SK-N-SH (cell line): ENCODE measurements at regions of chr17 and their contacts with region 1.

Region 1: DNA sequence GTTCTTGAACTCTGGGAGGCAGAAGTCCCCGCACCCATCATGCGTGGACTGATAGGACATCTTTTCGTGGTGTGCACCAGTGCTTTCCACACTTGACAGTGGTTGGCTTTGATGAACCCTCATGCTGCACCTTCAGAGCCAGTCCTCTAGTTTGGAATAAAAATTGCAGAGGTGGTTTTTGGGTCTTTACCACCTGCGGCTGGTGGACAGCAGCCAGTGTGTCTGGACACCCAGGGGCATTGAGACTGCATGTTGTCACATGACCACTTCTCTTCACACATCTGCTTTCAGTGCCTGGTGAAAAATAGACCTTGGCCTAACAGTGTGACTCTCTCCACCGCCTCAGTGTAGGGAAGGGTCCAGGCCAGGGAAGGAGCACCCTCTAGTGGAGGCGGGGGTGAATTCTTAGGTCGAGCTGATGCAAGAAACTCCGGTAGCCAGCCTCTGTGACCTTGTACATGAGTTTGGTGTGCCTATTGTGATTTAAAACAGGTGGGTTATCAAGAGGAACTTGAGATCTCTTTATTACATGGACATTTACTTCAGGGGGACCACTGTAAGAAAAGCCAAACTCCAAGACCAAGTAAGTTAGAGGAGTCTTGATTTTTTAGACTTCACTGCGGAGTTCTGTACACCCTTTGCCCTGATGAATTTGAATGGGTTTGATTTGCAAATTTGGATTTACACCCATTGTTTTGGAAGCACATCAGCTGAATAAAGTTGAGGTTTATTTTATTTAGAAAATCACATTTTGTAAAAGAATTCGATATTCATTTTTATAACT is 17.9 kb downstream of the GOSR2 start:
- DNase-seq: peak; percentile 91
- H3K4me3 ChIP-seq: no peak overlapping the region
- H3K27ac ChIP-seq: peak overlapping the region; percentile 19 to 58; a peak in 2 of 4 replicates
- H3K4me1 ChIP-seq: peaks cover 14 to 20% of the 10 kb centered on the region in 2 experiments; a peak in 3 of 4 replicates
- H3K27me3 ChIP-seq: no peaks in the 10 kb centered on the region
- CTCF ChIP-seq: peak; percentile 95
- EP300 ChIP-seq: peak in 1 of 2 experiments; percentile 44; a peak in 2 of 4 replicates
- RAD21 ChIP-seq: peak; percentile 97

Region 2: DNA sequence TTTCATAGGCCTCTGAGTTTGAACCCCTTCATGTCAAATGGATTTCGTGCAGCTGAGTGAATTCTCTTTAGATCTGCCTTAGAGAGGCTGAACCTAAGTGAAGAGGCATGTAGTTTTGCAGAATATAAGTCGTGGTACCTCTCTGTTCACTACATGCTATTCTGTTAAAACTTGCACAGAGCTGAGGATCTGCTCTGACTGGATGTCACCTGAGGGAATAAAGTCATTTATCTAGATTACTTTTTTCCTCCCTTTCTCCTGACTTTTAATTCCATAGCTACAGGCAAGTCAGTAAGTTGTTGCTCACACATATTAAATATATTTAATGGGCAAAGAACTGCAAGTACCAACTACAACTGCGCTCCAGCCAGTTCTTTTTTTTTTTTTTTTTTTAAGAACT is 187.0 kb before region 1 on chr17:
- CTCF ChIA-PET with region 1: no interaction called
- POLR2A ChIA-PET with region 1: no interaction called
- DNase-seq: no peak
- H3K4me3 ChIP-seq: no peak overlapping the region
- H3K27ac ChIP-seq: no peak overlapping the region
- H3K4me1 ChIP-seq: no peaks in the 10 kb centered on the region
- H3K27me3 ChIP-seq: no peaks in the 10 kb centered on the region
- CTCF ChIP-seq: no peak
- EP300 ChIP-seq: no peak
- RAD21 ChIP-seq: no peak

Region 3: GRCh38 chr17:46832945-46833839 is 107.6 kb before region 1 on chr17:
- CTCF ChIA-PET with region 1: interaction called, 115 read pairs
- POLR2A ChIA-PET with region 1: no interaction called
- DNase-seq: no peak
- H3K4me3 ChIP-seq: no peak overlapping the region
- H3K27ac ChIP-seq: peak overlapping the region in 1 of 2 experiments; percentile 29; a peak in 2 of 4 replicates
- H3K4me1 ChIP-seq: peaks cover 0 to 8% of the 10 kb centered on the region in 2 experiments; a peak in 2 of 4 replicates
- H3K27me3 ChIP-seq: no peaks in the 10 kb centered on the region
- CTCF ChIP-seq: no peak
- EP300 ChIP-seq: no peak
- RAD21 ChIP-seq: no peak

Region 4: GRCh38 chr17:46859996-46860395 is 80.8 kb before region 1 on chr17:
- CTCF ChIA-PET with region 1: interaction called, 28 read pairs
- POLR2A ChIA-PET with region 1: no interaction called
- DNase-seq: no peak
- H3K4me3 ChIP-seq: no peak overlapping the region
- H3K27ac ChIP-seq: no peak overlapping the region
- H3K4me1 ChIP-seq: no peaks in the 10 kb centered on the region; a peak in 1 of 4 replicates
- H3K27me3 ChIP-seq: peaks cover 9% of the 10 kb centered on the region; the same call in 1 of the 2 replicates
- CTCF ChIP-seq: no peak
- EP300 ChIP-seq: no peak
- RAD21 ChIP-seq: no peak

Region 5: DNA sequence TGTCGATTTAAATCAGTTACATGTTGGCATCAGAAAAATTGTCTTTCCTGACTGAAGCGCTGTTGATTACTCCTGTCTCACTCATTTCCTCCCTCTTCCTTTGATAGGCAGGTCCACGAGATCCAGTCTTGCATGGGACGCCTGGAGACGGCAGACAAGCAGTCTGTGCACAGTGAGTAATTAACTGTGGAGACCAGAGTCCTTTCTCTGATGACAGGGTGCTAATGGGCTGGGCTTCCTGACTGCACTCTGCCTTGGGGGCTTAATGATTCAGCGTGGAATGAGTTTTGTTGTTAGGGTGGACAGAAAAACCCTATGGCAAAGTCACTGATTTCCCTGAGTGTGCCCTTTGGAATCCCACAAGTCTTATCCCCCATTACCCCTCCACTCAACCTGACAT is 11.4 kb before region 1 on chr17:
- CTCF ChIA-PET with region 1: interaction called, 49 read pairs
- POLR2A ChIA-PET with region 1: no interaction called
- DNase-seq: no peak
- H3K4me3 ChIP-seq: no peak overlapping the region
- H3K27ac ChIP-seq: peak overlapping the region; percentile 6 to 7; a peak in 3 of 4 replicates
- H3K4me1 ChIP-seq: peaks cover 5 to 41% of the 10 kb centered on the region in 2 experiments; a peak in 2 of 4 replicates
- H3K27me3 ChIP-seq: no peaks in the 10 kb centered on the region
- CTCF ChIP-seq: no peak
- EP300 ChIP-seq: no peak
- RAD21 ChIP-seq: no peak

Region 6: GRCh38 chr17:46979147-46979863 is 38.5 kb after region 1 on chr17 and contains the start of gene RPRML:
- CTCF ChIA-PET with region 1: interaction called, 71 read pairs
- POLR2A ChIA-PET with region 1: no interaction called
- DNase-seq: peak; percentile 86
- H3K4me3 ChIP-seq: peak within 1 kb of the TSS; percentile 49 to 67
- H3K27ac ChIP-seq: no peak within 1 kb of the TSS
- H3K4me1 ChIP-seq: peaks cover 0 to 26% of the 10 kb centered on the region in 2 experiments; a peak in 1 of 4 replicates
- H3K27me3 ChIP-seq: peaks cover 15% of the 10 kb centered on the region
- CTCF ChIP-seq: no peak
- EP300 ChIP-seq: no peak
- RAD21 ChIP-seq: no peak
- polyA plus RNA-seq, gene RPRML: not detected in 2 replicates

Region 7: DNA sequence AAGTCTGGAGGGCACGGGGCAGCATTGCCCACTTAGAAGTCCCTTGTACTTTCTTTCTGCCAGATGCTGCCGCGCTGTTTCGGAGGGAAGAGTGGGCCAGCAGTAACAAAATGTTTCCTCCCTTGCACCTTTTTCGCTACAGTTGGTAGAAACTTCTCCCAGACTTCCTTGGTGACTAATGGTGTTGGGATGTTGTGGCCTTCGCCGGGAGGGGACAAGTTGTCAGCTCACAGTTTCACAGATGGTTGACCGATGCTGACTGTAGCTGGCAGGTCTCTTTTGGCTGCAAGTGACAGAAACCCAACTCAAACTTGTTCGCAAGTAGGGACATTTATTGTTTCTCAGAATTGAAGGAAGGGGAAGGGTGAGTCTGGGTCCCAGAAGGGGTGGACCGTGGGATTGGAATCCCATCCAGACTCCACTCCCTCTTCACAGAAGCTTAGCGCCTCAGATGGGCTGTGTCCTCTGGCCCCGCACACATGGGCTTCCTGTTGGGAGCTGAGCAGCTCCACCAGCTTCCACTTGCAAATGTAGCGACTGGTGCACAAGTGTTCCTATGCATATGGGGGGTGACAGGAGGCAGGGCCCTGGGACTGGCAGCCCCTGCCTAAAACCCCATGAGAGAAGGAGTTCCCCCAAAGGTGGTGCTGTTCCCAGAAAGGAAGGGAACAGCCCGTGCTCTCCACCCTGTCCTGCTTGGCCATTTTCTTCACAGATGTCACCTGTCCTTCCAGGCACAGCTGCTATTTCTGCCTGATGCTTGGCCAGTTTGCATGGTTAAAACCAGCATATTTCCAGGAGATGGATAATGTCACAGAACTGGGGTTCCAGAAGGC is 69.2 kb after region 1 on chr17:
- CTCF ChIA-PET with region 1: interaction called, 278 read pairs
- POLR2A ChIA-PET with region 1: no interaction called
- DNase-seq: no peak
- H3K4me3 ChIP-seq: no peak overlapping the region
- H3K27ac ChIP-seq: no peak overlapping the region
- H3K4me1 ChIP-seq: no peaks in the 10 kb centered on the region; a peak in 1 of 4 replicates
- H3K27me3 ChIP-seq: no peaks in the 10 kb centered on the region
- CTCF ChIP-seq: no peak
- EP300 ChIP-seq: no peak
- RAD21 ChIP-seq: no peak